Naive thymus-derived CD4-positive, alpha-beta T cell (primary cell): ENCODE measurements at regions of chr5 and their contacts with region 1.

Region 1: GRCh38 chr5:141650851-141651727 is at the start of gene FCHSD1:
- DNase-seq: peak; percentile 64 to 88 (median 67)
- ATAC-seq: peak; percentile 98
- H3K4me3 ChIP-seq: peak within 1 kb of the TSS; percentile 62
- H3K4me3 Mint-ChIP-seq: peak within 1 kb of the TSS; percentile 60 to 97 (median 90)
- H3K27ac ChIP-seq: peak within 1 kb of the TSS; percentile 75
- H3K27ac Mint-ChIP-seq: peak within 1 kb of the TSS; percentile 56 to 95 (median 89)
- H3K4me1 ChIP-seq: peaks cover 15 to 19% of the 10 kb centered on the region in 2 donors
- H3K4me1 Mint-ChIP-seq: peaks cover 27 to 51% (median 37%) of the 10 kb centered on the region in 7 donors
- H3K27me3 ChIP-seq: no peaks in the 10 kb centered on the region
- H3K27me3 Mint-ChIP-seq: peaks cover 0 to 4% (median 0%) of the 10 kb centered on the region in 5 donors
- total RNA-seq, gene FCHSD1: 69.6 to 96.1 (median 92.3) TPM

Region 2: DNA sequence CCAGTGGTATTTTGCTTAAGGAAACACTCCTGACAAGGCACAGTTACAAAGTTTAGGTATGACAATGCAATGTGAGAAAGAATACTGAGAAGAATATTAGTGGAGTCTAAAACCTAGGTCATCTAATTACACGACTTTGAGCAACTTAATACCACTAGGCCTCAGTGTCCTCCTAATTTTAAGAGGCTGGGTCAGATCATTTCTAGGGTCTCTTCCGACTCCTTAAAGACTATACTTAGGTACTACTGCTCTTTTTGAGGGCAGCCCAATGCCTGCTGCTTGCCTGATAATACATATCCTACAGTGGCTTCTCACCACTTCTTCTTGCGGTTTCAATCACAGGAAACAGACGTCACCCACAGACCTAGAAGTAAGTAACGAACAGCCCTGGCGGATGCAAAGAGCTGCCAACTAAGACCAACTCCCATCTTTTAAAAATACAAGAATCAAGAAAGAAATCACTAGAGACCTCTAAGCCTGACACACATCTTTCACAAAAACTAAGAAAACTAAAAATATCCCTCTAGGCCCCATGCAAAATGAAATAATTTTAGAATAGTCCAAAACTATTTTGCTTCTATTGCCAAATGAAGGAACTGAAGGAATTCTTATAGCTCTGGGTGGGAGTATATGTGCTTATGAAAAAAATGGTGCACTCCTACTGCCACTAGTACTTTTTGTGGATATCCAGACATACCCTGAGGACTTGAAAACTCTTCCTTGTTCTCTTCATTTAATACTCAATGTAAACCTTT is 45.4 kb before region 1 on chr5:
- CTCF ChIA-PET with region 1: no interaction called
- POLR2A ChIA-PET with region 1: no interaction called
- intact Hi-C with region 1: loop called in 1 of 2 experiments (anchors 5 kb)
- DNase-seq: peak in 8 of 9 donors; percentile 60 to 90 (median 88)
- ATAC-seq: peak; percentile 95
- H3K4me3 ChIP-seq: peak overlapping the region; percentile 37
- H3K4me3 Mint-ChIP-seq: peak overlapping the region; percentile 13 to 88 (median 80)
- H3K27ac ChIP-seq: peak overlapping the region; percentile 72
- H3K27ac Mint-ChIP-seq: peak overlapping the region; percentile 83 to 96 (median 89)
- H3K4me1 ChIP-seq: peaks cover 86 to 87% of the 10 kb centered on the region in 2 donors
- H3K4me1 Mint-ChIP-seq: peaks cover 60 to 97% (median 90%) of the 10 kb centered on the region in 7 donors
- H3K27me3 ChIP-seq: no peaks in the 10 kb centered on the region
- H3K27me3 Mint-ChIP-seq: no peaks in the 10 kb centered on the region

Region 3: GRCh38 chr5:141923448-141924352 is 272.6 kb after region 1 on chr5 and contains the start of gene DELE1:
- CTCF ChIA-PET with region 1: no interaction called
- POLR2A ChIA-PET with region 1: interaction called, 4 read pairs
- intact Hi-C with region 1: loop called (anchors 1 kb)
- DNase-seq: peak; percentile 79 to 92 (median 90)
- ATAC-seq: peak; percentile 97
- H3K4me3 ChIP-seq: peak within 1 kb of the TSS; percentile 81
- H3K4me3 Mint-ChIP-seq: peak within 1 kb of the TSS; percentile 88 to 98 (median 94)
- H3K27ac ChIP-seq: peak within 1 kb of the TSS; percentile 98
- H3K27ac Mint-ChIP-seq: peak within 1 kb of the TSS; percentile 87 to 99 (median 98)
- H3K4me1 ChIP-seq: peaks cover 10 to 14% of the 10 kb centered on the region in 2 donors
- H3K4me1 Mint-ChIP-seq: peaks cover 23 to 54% (median 36%) of the 10 kb centered on the region in 7 donors
- H3K27me3 ChIP-seq: no peaks in the 10 kb centered on the region
- H3K27me3 Mint-ChIP-seq: no peaks in the 10 kb centered on the region
- total RNA-seq, gene DELE1: 77.3 to 101 (median 88.2) TPM